ENCODE measurements at regions of chr14 and their contacts with region 1.

Region 1: GRCh38 chr14:101475456-101476257 is 85.6 kb upstream of the DIO3 start:
- DNase-seq: peak; percentile 44 to 94
- H3K4me3 ChIP-seq: peak overlapping the region; percentile 68
- H3K27ac ChIP-seq: peak overlapping the region; percentile 91
- H3K4me1 ChIP-seq: peaks cover 59% of the 10 kb centered on the region
- H3K27me3 ChIP-seq: no peaks in the 10 kb centered on the region
- CTCF ChIP-seq: no peak

Region 2: GRCh38 chr14:100979780-100980179 is 495.9 kb before region 1 on chr14:
- CTCF ChIA-PET with region 1: no interaction called
- POLR2A ChIA-PET with region 1: no interaction called
- intact Hi-C with region 1: no loop called
- DNase-seq: no peak
- H3K4me3 ChIP-seq: no peak overlapping the region
- H3K27ac ChIP-seq: no peak overlapping the region
- H3K4me1 ChIP-seq: no peaks in the 10 kb centered on the region
- H3K27me3 ChIP-seq: no peaks in the 10 kb centered on the region
- CTCF ChIP-seq: no peak

Region 3: DNA sequence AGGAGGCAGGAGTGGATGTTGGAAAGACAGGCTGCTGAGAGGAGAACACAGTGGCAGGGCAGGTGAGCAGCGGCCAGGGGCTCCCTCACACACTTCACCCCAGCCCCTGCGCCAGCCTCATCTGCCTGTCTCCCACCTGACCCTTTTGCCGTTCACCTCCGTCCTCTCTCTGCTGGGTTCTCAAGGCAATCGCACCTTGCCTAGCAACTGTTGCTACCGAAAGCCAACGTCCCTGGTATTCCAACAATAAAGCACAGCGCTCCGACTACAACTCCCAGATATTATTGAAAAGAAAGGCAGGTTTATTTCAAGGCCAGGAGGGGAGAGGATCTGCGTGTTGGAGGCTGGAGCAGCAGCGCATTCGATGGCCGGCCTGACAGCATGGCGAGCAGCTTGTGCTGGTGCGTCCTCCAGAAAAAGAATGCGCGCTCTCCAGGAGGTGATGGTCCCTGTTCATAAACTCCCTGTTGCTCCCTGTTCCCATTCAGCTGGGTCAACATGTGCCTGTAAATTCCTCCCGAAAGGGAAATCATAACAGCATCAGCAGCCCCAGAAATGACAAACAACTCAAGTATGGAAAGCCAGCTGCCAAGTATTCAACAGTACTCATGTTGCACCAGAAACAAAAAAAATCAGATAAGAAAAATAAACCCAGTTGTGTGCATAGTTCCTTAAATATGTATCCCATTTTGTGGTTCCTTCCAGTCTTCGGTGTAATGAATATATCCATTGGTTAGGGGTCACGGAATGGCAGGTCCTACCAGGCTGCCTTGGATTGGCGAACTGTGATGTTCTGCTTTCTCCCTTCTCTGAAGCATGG is 67.4 kb before region 1 on chr14:
- CTCF ChIA-PET with region 1: no interaction called
- POLR2A ChIA-PET with region 1: no interaction called
- intact Hi-C with region 1: loop called (anchors 1 kb)
- DNase-seq: peak; percentile 42 to 95
- H3K4me3 ChIP-seq: no peak overlapping the region
- H3K27ac ChIP-seq: peak overlapping the region; percentile 20
- H3K4me1 ChIP-seq: peaks cover 76% of the 10 kb centered on the region
- H3K27me3 ChIP-seq: no peaks in the 10 kb centered on the region
- CTCF ChIP-seq: no peak

Region 4: DNA sequence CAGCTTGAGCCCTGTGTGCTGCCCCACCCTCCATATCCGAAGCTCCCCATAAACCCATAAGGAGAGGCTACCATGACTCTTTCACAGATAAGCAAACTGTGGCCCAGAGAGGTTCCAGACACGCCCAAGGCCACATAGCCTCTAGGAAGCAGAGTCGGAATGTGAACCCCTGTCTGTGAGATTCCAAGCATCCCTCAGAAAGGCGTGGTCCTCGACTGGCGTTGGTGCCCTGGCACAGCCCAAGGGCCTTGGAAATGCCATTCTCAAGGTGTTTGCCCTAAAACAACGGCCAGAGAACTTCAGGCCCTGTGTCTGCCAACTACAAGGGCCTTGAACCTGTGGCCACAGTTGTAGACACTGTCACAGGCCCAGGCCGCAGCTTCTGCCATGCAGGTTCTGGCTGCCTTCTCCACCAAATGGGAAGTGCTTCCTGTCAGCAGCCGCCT is 77.2 kb after region 1 on chr14:
- CTCF ChIA-PET with region 1: no interaction called
- POLR2A ChIA-PET with region 1: interaction called, 13 read pairs
- intact Hi-C with region 1: loop called (anchors 2 kb)
- DNase-seq: peak; percentile 88 to 97
- H3K4me3 ChIP-seq: no peak overlapping the region
- H3K27ac ChIP-seq: peak overlapping the region; percentile 25
- H3K4me1 ChIP-seq: peaks cover 33% of the 10 kb centered on the region
- H3K27me3 ChIP-seq: no peaks in the 10 kb centered on the region
- CTCF ChIP-seq: no peak